ENCODE measurements at regions of chr2 and their contacts with region 1.

Region 1: DNA sequence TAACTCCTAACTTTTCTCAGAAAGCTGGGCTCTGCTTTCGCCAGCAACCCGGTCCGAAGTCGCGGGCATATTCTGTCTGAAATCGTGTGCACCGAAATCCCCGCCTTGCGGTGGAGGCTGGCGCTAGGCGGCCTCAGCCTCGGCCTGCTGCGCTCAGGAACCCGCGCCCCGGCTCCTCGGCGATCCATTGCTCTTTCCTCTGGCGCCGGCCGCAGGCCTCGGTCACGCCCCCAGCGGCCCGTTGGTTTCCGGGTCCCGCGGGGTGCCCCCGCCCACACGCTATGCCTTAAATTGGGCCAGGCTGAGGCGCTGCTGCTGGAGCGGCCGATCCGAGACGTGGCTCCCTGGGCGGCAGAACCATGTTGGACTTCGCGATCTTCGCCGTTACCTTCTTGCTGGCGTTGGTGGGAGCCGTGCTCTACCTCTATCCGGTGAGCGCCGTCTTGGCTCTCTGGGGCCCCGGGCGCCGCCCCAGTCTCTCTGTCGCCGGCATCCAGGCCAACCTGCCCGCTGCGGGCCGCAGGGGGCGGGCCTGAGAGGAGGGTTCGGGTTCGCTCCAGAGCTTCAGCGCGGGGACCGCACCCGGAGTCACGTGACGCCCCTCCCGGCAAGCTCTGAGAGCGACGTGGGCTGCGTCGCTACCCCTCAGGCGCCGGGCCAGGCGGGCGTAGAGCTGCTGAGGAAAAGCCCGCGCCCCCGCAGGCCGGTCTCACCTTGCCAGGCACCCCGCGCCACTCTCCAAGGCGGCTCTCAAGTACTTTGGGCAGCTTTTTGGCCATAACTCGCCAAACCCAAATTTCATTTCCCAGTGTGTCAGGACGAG is at the start of gene CYP20A1:
- DNase-seq: peak; percentile 94 to 99 (median 98)
- ATAC-seq: peak; percentile 91
- H3K4me3 ChIP-seq: peak within 1 kb of the TSS; percentile 97
- H3K4me3 Mint-ChIP-seq: peak within 1 kb of the TSS; percentile 90 to 100 (median 95)
- H3K27ac ChIP-seq: peak within 1 kb of the TSS; percentile 98
- H3K27ac Mint-ChIP-seq: peak within 1 kb of the TSS; percentile 96 to 100 (median 98)
- H3K4me1 ChIP-seq: peaks cover 6 to 14% of the 10 kb centered on the region in 2 donors
- H3K4me1 Mint-ChIP-seq: peaks cover 25 to 45% (median 33%) of the 10 kb centered on the region in 7 donors
- H3K27me3 ChIP-seq: no peaks in the 10 kb centered on the region
- H3K27me3 Mint-ChIP-seq: no peaks in the 10 kb centered on the region
- total RNA-seq, gene CYP20A1: 23.7 to 43.3 (median 28.3) TPM

Region 2: DNA sequence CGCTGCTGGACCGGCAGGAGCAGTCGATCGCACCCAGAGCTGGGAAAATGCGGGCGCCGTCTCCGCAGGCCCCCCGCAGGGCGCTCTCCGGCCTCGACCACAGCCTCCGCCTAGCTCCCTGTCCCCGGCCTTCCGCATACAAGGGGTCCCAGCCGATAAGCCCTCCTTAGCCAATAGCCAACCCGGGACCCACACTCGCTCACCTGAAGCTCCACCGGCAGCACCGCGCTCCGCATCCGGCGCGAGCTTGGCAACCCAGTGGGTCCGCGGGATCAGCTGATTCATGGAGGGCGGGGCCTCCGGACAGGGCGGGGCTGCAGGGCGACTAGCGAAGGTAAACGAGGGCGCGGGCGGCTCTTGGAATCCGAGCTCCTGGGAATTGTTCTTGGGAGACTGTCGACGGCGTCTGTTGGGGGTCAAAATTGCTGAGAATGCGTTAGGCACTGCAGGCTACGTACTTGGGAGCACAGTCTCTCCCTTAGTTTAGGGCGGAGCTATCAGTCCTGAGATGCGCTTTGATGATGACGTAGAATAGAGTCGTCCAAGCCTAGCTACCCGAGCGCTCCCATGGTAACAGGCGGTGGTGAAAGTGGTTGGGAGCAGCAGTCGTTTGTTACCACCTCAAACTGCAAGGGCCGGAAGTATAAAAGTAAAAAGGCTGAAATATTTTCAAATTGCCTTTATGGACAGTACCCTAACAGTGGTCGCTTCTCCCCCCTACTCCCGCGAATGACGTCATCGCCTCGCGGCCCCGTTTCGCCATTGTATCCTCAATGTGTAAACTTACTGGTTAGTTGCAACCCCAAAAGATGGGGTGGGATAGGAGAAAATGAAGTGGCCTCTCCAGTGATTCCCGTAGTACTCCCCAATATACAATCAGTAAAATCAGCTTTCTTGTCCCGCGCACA is 1458.0 kb before region 1 on chr2 and contains the start of gene ALS2:
- CTCF ChIA-PET with region 1: no interaction called
- POLR2A ChIA-PET with region 1: no interaction called
- intact Hi-C with region 1: loop called in 1 of 2 experiments (anchors 2 kb)
- DNase-seq: peak; percentile 91 to 97 (median 95)
- ATAC-seq: peak; percentile 96
- H3K4me3 ChIP-seq: peak within 1 kb of the TSS; percentile 96
- H3K4me3 Mint-ChIP-seq: peak within 1 kb of the TSS; percentile 87 to 99 (median 98)
- H3K27ac ChIP-seq: peak within 1 kb of the TSS; percentile 84
- H3K27ac Mint-ChIP-seq: peak within 1 kb of the TSS; percentile 84 to 99 (median 97)
- H3K4me1 ChIP-seq: peaks cover 7 to 10% of the 10 kb centered on the region in 2 donors
- H3K4me1 Mint-ChIP-seq: peaks cover 5 to 36% (median 21%) of the 10 kb centered on the region in 7 donors
- H3K27me3 ChIP-seq: no peaks in the 10 kb centered on the region
- H3K27me3 Mint-ChIP-seq: peaks cover 0 to 22% (median 0%) of the 10 kb centered on the region in 5 donors
- total RNA-seq, gene ALS2: 8.9 to 13.5 (median 10.7) TPM

Region 3: GRCh38 chr2:202375609-202376408 is 863.1 kb before region 1 on chr2 and contains the start of gene BMPR2:
- CTCF ChIA-PET with region 1: no interaction called
- POLR2A ChIA-PET with region 1: no interaction called
- intact Hi-C with region 1: loop called (anchors 1 kb)
- DNase-seq: peak; percentile 68 to 94 (median 81)
- ATAC-seq: peak; percentile 90
- H3K4me3 ChIP-seq: peak within 1 kb of the TSS; percentile 95
- H3K4me3 Mint-ChIP-seq: peak within 1 kb of the TSS; percentile 94 to 100 (median 98)
- H3K27ac ChIP-seq: peak within 1 kb of the TSS; percentile 81
- H3K27ac Mint-ChIP-seq: peak within 1 kb of the TSS; percentile 82 to 98 (median 92)
- H3K4me1 ChIP-seq: peaks cover 0 to 3% of the 10 kb centered on the region in 2 donors
- H3K4me1 Mint-ChIP-seq: peaks cover 13 to 41% (median 29%) of the 10 kb centered on the region in 7 donors
- H3K27me3 ChIP-seq: no peaks in the 10 kb centered on the region
- H3K27me3 Mint-ChIP-seq: peaks cover 0 to 28% (median 0%) of the 10 kb centered on the region in 5 donors
- total RNA-seq, gene BMPR2: 8.0 to 33.1 (median 15.2) TPM

Region 4: GRCh38 chr2:203014456-203015199 is 224.3 kb before region 1 on chr2 and contains the start of gene NBEAL1:
- CTCF ChIA-PET with region 1: no interaction called
- POLR2A ChIA-PET with region 1: no interaction called
- intact Hi-C with region 1: loop called (anchors 1 kb)
- DNase-seq: peak; percentile 88 to 99 (median 90)
- ATAC-seq: peak; percentile 95
- H3K4me3 ChIP-seq: peak within 1 kb of the TSS; percentile 92
- H3K4me3 Mint-ChIP-seq: peak within 1 kb of the TSS; percentile 90 to 97 (median 95)
- H3K27ac ChIP-seq: peak within 1 kb of the TSS; percentile 92
- H3K27ac Mint-ChIP-seq: peak within 1 kb of the TSS; percentile 84 to 98 (median 94)
- H3K4me1 ChIP-seq: peaks cover 5 to 14% of the 10 kb centered on the region in 2 donors
- H3K4me1 Mint-ChIP-seq: peaks cover 18 to 48% (median 41%) of the 10 kb centered on the region in 7 donors
- H3K27me3 ChIP-seq: no peaks in the 10 kb centered on the region
- H3K27me3 Mint-ChIP-seq: peaks cover 0 to 19% (median 0%) of the 10 kb centered on the region in 5 donors
- total RNA-seq, gene NBEAL1: 11.6 to 15.9 (median 12.6) TPM

Region 5: DNA sequence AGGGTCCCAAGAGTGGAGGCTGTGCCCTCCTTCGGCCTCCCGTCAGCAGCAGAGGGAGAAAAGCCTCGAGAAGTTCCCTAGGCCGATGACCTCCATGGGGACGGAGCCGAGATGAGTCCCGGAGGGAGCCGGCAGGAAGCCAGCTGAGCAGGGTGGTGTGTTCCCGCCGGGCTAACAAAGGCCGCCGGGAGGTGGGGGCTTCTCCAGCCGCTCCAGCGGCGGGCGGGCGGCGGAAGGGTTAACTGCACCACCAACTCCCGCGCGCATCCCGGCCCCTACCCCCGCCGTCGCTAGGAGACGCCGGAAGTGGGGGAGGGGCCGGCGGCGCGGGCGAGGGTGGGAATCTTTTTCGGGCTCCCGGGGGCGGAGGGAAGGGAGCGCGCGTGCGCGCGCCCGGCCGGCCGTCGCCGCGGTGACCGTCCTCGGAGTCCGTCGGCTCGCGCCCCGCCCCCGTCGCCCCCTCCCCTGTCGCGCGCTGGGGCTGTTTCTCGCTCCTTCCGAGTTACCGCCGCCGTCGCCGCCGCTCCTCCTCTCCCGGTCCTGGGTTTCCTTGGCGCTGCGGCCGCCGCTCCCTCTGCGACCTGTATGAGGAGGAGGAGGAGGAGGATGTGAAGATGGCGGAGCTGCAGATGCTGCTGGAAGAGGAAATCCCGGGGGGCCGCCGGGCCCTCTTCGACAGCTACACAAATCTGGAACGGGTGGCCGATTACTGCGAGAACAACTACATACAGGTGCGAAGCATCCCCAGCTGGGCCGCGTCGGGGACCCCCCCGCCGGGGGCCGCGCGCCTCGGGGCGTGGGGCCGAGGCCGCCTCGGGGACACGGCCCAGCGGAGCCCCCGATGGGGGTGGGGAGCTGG is 89.2 kb after region 1 on chr2 and contains the start of gene ABI2:
- CTCF ChIA-PET with region 1: no interaction called
- POLR2A ChIA-PET with region 1: no interaction called
- intact Hi-C with region 1: loop called (anchors 1 to 2 kb)
- DNase-seq: peak; percentile 27 to 81 (median 51)
- ATAC-seq: peak; percentile 71
- H3K4me3 ChIP-seq: peak within 1 kb of the TSS; percentile 84
- H3K4me3 Mint-ChIP-seq: peak within 1 kb of the TSS; percentile 85 to 97 (median 93)
- H3K27ac ChIP-seq: peak within 1 kb of the TSS; percentile 72
- H3K27ac Mint-ChIP-seq: peak within 1 kb of the TSS; percentile 72 to 96 (median 90)
- H3K4me1 ChIP-seq: peaks cover 7 to 15% of the 10 kb centered on the region in 2 donors
- H3K4me1 Mint-ChIP-seq: peaks cover 21 to 40% (median 33%) of the 10 kb centered on the region in 7 donors
- H3K27me3 ChIP-seq: no peaks in the 10 kb centered on the region
- H3K27me3 Mint-ChIP-seq: no peaks in the 10 kb centered on the region
- total RNA-seq, gene ABI2: 19.5 to 41.5 (median 28.2) TPM

Region 6: DNA sequence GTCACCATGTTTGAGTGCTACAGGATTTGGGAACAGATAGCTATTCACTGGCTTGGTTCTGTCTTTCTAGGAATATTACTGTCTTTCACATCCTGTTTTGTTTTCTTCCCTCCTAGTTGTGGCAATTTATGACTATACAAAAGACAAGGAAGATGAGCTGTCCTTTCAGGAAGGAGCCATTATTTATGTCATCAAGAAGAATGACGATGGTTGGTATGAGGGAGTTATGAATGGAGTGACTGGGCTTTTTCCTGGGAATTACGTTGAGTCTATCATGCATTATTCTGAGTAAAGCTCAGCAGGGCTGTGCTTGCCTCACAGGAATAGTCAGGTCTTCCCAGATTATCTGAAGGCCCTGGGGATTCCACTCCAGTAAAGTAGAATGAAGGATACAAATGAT is 188.1 kb after region 1 on chr2:
- CTCF ChIA-PET with region 1: no interaction called
- POLR2A ChIA-PET with region 1: no interaction called
- intact Hi-C with region 1: no loop called
- DNase-seq: no peak
- ATAC-seq: no peak
- H3K4me3 ChIP-seq: no peak overlapping the region
- H3K4me3 Mint-ChIP-seq: no peak overlapping the region
- H3K27ac ChIP-seq: no peak overlapping the region
- H3K27ac Mint-ChIP-seq: peak overlapping the region in 2 of 9 donors; percentile 8 to 15
- H3K4me1 ChIP-seq: no peaks in the 10 kb centered on the region
- H3K4me1 Mint-ChIP-seq: peaks cover 0 to 3% (median 0%) of the 10 kb centered on the region in 7 donors
- H3K27me3 ChIP-seq: no peaks in the 10 kb centered on the region
- H3K27me3 Mint-ChIP-seq: no peaks in the 10 kb centered on the region

Region 7: GRCh38 chr2:203871371-203871983 is 632.6 kb after region 1 on chr2:
- CTCF ChIA-PET with region 1: no interaction called
- POLR2A ChIA-PET with region 1: no interaction called
- intact Hi-C with region 1: loop called (anchors 2 to 5 kb)
- DNase-seq: peak in 1 of 9 donors; percentile 45
- ATAC-seq: peak; percentile 30
- H3K4me3 ChIP-seq: no peak overlapping the region
- H3K4me3 Mint-ChIP-seq: peak overlapping the region; percentile 55 to 96 (median 77)
- H3K27ac ChIP-seq: peak overlapping the region; percentile 79
- H3K27ac Mint-ChIP-seq: peak overlapping the region; percentile 48 to 99 (median 92)
- H3K4me1 ChIP-seq: peaks cover 56 to 64% of the 10 kb centered on the region in 2 donors
- H3K4me1 Mint-ChIP-seq: peaks cover 44 to 93% (median 80%) of the 10 kb centered on the region in 7 donors
- H3K27me3 ChIP-seq: no peaks in the 10 kb centered on the region
- H3K27me3 Mint-ChIP-seq: no peaks in the 10 kb centered on the region